Colonic mucosa (tissue), 4 donors: ENCODE measurements at regions of chr2 and their contacts with region 1.

Region 1: GRCh38 chr2:179410552-179411356 is 146.1 kb upstream of the SESTD1 start:
- DNase-seq: peak; percentile 38
- H3K4me3 ChIP-seq: no peak overlapping the region
- H3K27ac ChIP-seq: no peak overlapping the region
- H3K4me1 ChIP-seq: no peaks in the 10 kb centered on the region
- H3K27me3 ChIP-seq: no peaks in the 10 kb centered on the region
- CTCF ChIP-seq: peak; percentile 56

Region 2: GRCh38 chr2:179218848-179219594 is 191.7 kb before region 1 on chr2:
- intact Hi-C with region 1: loop called (anchors 10 kb)
- DNase-seq: peak; percentile 62
- H3K4me3 ChIP-seq: no peak overlapping the region
- H3K27ac ChIP-seq: no peak overlapping the region
- H3K4me1 ChIP-seq: no peaks in the 10 kb centered on the region
- H3K27me3 ChIP-seq: no peaks in the 10 kb centered on the region
- CTCF ChIP-seq: peak; percentile 88